ENCODE measurements at regions of chr17 and their contacts with region 1.

Region 1: DNA sequence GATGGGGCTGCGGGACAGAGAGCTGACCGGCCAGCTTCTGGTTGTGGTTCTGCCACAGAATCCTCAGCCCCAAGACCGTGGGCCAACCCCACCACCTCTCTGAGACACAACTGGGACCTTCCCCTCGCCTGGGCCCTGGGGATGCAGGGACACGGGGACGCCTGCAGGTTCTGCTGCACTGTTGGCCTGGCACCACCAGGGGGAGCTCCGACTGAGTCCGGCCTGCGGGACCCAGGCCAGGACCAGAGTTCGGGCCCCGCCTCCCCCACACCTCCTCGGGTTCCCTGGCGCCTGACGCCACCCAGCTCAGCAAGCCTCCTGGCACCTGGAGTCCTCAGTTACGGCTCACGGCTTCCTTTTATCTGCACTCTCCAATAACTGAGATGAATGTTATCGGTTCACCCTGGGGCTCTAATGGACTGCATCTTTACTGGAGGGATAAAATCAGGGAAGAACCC is 27.3 kb downstream of the TBC1D16 start:
- DNase-seq: peak; percentile 83 to 92 (median 92)
- ATAC-seq: peak; percentile 76 to 78
- H3K4me3 ChIP-seq: no peak overlapping the region
- H3K27ac ChIP-seq: no peak overlapping the region
- H3K4me1 ChIP-seq: no peaks in the 10 kb centered on the region
- H3K27me3 ChIP-seq: no peaks in the 10 kb centered on the region

Region 2: GRCh38 chr17:80071116-80071980 is 62.9 kb after region 1 on chr17:
- intact Hi-C with region 1: no loop called
- DNase-seq: peak; percentile 75 to 90 (median 87)
- ATAC-seq: peak; percentile 75 to 79
- H3K4me3 ChIP-seq: peak overlapping the region; percentile 34
- H3K27ac ChIP-seq: peak overlapping the region; percentile 91
- H3K4me1 ChIP-seq: peaks cover 13% of the 10 kb centered on the region
- H3K27me3 ChIP-seq: no peaks in the 10 kb centered on the region

Region 3: DNA sequence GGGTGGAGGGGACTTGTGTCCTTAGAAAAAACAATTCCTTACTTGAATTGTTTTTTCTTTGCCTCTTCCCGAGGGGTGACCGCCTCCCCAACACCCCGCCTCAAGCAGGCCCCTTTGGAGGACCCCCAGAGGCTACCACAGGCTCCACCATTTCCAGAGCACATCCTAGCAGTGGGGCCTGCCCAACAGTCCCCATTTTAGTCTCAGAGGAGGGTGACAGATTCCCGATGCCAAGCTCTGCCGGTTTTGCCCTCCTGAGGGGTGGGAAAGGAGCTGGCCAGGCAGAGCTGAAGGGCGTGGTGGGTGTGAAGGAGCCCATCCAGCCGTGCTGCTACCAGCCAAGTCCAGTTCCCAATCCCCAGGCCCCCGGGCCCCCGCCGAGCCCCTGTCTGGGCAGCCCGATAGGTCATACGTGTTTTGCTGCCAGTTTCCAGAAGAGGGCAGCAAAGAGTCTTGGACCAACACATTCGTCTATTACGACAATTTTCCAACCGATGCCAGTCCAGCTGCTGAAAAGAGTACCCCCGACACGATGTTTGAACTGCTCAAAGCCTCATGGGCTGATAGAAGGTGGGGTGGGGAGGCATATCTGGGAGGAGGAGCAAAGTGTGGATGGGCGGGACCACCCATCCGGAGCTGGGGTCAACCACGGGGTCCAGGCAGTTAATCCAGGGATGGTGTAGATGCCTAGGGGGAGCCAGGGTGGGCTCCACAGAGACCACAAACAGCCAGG is 74.2 kb after region 1 on chr17:
- intact Hi-C with region 1: loop called in 1 of 4 experiments (anchors 5 kb)
- DNase-seq: peak; percentile 58 to 75 (median 73)
- ATAC-seq: peak; percentile 42 to 72
- H3K4me3 ChIP-seq: no peak overlapping the region
- H3K27ac ChIP-seq: no peak overlapping the region
- H3K4me1 ChIP-seq: no peaks in the 10 kb centered on the region
- H3K27me3 ChIP-seq: no peaks in the 10 kb centered on the region